Pancreas (tissue), 10 donors: ENCODE measurements at regions of chr6 and their contacts with region 1.

Region 1: DNA sequence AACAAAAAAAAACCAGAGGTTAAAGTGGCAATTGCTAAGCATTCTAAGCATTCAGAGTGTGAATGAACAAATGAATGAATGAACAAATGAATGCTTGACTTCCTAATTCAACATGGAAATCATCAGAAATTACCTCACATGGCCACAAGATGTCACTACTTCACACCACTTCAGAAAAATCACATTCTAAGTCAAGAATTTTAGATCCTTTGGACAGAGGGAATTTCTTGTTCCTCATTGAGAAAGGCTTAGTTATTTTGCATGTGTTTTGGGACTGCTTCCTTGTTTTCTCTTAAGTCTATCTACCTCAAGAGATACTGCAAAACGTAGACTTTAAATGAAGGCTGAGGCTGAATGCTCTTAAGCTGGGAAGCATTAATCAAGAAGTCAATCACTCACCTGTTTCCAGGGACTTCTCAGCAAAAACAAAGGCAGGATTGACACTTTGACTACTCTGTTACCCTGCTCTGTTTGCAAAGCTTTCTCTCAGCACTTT is 120.2 kb downstream of the MBOAT1 start:
- DNase-seq: no peak
- ATAC-seq: peak in 3 of 4 donors; percentile 63 to 71 (median 71)
- H3K4me3 ChIP-seq: no peak overlapping the region
- H3K27ac ChIP-seq: no peak overlapping the region
- H3K4me1 ChIP-seq: no peaks in the 10 kb centered on the region
- H3K27me3 ChIP-seq: no peaks in the 10 kb centered on the region
- CTCF ChIP-seq: peak; percentile 40 to 61 (median 54)

Region 2: GRCh38 chr6:19399406-19399805 is 692.7 kb before region 1 on chr6:
- intact Hi-C with region 1: no loop called
- DNase-seq: no peak
- ATAC-seq: no peak
- H3K4me3 ChIP-seq: no peak overlapping the region
- H3K27ac ChIP-seq: no peak overlapping the region
- H3K4me1 ChIP-seq: no peaks in the 10 kb centered on the region
- H3K27me3 ChIP-seq: no peaks in the 10 kb centered on the region
- CTCF ChIP-seq: no peak

Region 3: GRCh38 chr6:20511852-20512251 is 419.7 kb after region 1 on chr6:
- intact Hi-C with region 1: loop called in 1 of 3 experiments (anchors 10 kb)
- DNase-seq: no peak
- ATAC-seq: no peak
- H3K4me3 ChIP-seq: no peak overlapping the region
- H3K27ac ChIP-seq: no peak overlapping the region
- H3K4me1 ChIP-seq: no peaks in the 10 kb centered on the region
- H3K27me3 ChIP-seq: no peaks in the 10 kb centered on the region
- CTCF ChIP-seq: no peak